ENCODE measurements at regions of chr11 and their contacts with region 1.

Region 1: GRCh38 chr11:7893796-7894195 is 37.3 kb downstream of the OR10A6 start:
- DNase-seq: peak in 2 of 4 donors; percentile 21 to 46
- ATAC-seq: peak; percentile 90
- H3K4me3 ChIP-seq: no peak overlapping the region
- H3K27ac ChIP-seq: no peak overlapping the region
- H3K4me1 ChIP-seq: no peaks in the 10 kb centered on the region
- H3K27me3 ChIP-seq: peaks cover 0 to 7% of the 10 kb centered on the region in 2 donors
- CTCF ChIP-seq: no peak

Region 2: DNA sequence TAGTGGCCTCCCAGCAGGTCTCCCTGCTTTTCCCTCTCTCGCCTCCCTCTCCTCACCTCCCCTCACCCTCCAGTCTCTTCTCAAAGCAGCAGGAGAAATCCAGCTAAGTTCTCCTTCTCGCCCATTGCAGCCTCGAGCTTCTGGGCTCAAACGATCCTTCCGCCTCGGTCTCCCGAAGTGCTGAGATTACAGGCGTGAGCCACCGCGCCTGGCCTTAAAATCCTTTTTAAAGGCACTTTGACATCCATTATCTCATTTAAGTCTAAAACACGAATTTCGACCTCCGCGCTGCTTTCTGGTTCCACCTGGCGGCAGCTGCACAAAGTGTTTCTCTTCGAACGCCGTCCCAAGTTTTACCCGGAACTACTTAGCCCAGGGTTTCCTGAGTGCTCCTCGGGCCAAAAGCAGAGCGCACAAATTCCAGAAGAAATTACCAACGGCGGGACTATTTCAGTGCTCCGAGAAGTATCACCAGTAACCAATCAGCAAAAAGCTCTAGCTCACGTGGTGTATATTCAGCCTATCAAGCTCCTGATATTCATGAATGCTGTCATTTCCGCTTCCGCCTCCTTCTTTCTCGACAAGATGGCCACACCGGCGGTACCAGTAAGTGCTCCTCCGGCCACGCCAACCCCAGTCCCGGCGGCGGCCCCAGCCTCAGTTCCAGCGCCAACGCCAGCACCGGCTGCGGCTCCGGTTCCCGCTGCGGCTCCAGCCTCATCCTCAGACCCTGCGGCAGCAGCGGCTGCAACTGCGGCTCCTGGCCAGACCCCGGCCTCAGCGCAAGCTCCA is 93.2 kb after region 1 on chr11 and contains the start of gene EIF3F:
- intact Hi-C with region 1: loop called in 1 of 2 experiments (anchors 2 kb)
- DNase-seq: peak; percentile 89 to 98 (median 92)
- ATAC-seq: peak; percentile 99
- H3K4me3 ChIP-seq: peak within 1 kb of the TSS; percentile 76 to 88
- H3K27ac ChIP-seq: peak within 1 kb of the TSS; percentile 56 to 87
- H3K4me1 ChIP-seq: peaks cover 11 to 39% of the 10 kb centered on the region in 2 donors
- H3K27me3 ChIP-seq: no peaks in the 10 kb centered on the region
- CTCF ChIP-seq: peak; percentile 83 to 86
- polyA plus RNA-seq, gene EIF3F: 343 to 400 (median 354) TPM

Region 3: DNA sequence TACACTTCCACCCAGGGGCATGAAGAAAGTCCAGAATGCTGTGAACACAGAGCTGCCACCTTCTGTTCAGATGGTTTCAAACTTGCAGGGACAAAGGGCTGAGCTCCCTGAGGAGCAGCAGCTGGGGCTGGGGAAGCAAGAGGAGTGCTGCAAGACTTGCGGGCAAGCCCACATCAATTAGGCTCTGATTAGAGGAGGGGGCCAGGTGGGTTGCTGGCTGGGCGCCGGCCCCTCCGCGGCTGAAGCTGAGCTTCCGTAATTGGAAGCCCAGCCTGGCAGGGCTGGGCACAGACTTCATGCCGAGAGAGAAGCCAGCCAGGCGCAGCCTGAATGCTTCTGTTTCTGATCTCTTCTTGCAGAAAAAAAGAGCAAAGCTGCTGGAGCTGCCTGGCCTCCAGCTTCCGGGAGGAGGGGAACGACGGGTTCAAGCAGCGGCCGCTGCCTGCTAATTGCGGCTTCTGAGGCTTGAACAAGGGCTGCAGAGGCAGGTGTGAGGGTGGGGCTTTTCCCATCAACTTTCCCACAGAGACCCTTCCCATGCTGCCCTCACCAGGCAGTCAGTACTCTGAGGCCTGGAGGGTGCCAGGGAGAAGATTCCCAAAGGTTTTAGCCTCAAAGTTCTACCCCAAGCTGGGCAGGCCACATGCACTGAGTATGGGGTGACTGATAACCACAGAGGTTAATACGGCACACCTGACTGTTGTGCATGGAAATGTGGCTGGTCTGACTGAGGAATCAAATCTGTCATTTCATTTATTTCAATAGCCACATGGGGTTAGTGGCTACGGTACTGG is 461.0 kb after region 1 on chr11:
- intact Hi-C with region 1: no loop called
- DNase-seq: peak in 2 of 4 donors; percentile 36 to 59
- ATAC-seq: peak; percentile 20
- H3K4me3 ChIP-seq: no peak overlapping the region
- H3K27ac ChIP-seq: no peak overlapping the region
- H3K4me1 ChIP-seq: no peaks in the 10 kb centered on the region
- H3K27me3 ChIP-seq: peaks cover 0 to 37% of the 10 kb centered on the region in 2 donors
- CTCF ChIP-seq: no peak